Activated naive CD4-positive, alpha-beta T cell treated with anti-CD3 and anti-CD28 coated beads for 36 hours (primary cell): ENCODE measurements at regions of chr6 and their contacts with region 1.

Region 1: GRCh38 chr6:116287689-116288282 is 8.1 kb upstream of the TSPYL1 start:
- DNase-seq: no peak
- H3K4me3 Mint-ChIP-seq: no peak overlapping the region
- H3K27ac Mint-ChIP-seq: no peak overlapping the region
- H3K4me1 Mint-ChIP-seq: no peaks in the 10 kb centered on the region
- H3K27me3 Mint-ChIP-seq: no peaks in the 10 kb centered on the region

Region 2: GRCh38 chr6:116268589-116269293 is 19.0 kb before region 1 on chr6:
- CTCF ChIA-PET with region 1: interaction called, 10 read pairs
- intact Hi-C with region 1: no loop called
- DNase-seq: no peak
- H3K4me3 Mint-ChIP-seq: no peak overlapping the region
- H3K27ac Mint-ChIP-seq: no peak overlapping the region
- H3K4me1 Mint-ChIP-seq: peaks cover 27% of the 10 kb centered on the region
- H3K27me3 Mint-ChIP-seq: no peaks in the 10 kb centered on the region

Region 3: GRCh38 chr6:116444092-116444491 is 156.3 kb after region 1 on chr6:
- CTCF ChIA-PET with region 1: interaction called, 5 read pairs
- intact Hi-C with region 1: loop called (anchors 5 kb)
- DNase-seq: no peak
- H3K4me3 Mint-ChIP-seq: no peak overlapping the region
- H3K27ac Mint-ChIP-seq: no peak overlapping the region
- H3K4me1 Mint-ChIP-seq: peaks cover 2% of the 10 kb centered on the region
- H3K27me3 Mint-ChIP-seq: peaks cover 16% of the 10 kb centered on the region

Region 4: DNA sequence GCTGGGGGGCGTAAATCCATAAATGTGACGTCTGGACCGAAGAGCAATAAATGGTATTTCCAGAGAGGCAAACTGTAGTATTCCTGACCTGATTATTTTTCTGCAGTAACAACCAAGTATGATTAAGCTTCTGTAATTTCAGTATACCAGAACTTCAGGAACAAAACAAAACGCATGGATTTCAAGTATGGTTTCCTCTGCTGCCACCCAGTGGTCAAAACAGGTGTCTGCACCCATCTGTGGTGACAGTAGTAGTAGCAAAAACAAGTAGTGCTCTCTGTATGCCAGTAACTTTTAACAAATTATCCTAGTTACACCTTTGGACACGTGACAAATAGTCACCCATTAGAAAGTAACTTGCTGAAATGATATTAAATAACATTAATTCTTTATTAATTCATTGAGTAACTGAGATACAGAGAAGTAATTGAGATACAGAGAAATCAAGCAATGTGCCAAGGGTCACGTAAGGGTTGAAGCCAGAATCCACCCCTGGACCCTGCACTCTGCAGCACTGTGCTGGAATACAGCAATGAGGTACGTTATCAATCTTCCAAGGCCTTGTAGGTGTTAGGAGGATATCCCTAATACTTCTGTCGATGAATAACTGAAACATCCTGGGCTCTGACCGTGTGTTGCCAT is 273.7 kb after region 1 on chr6:
- CTCF ChIA-PET with region 1: interaction called, 19 read pairs
- intact Hi-C with region 1: loop called (anchors 1 kb)
- DNase-seq: peak; percentile 80
- H3K4me3 Mint-ChIP-seq: no peak overlapping the region
- H3K27ac Mint-ChIP-seq: no peak overlapping the region
- H3K4me1 Mint-ChIP-seq: peaks cover 3% of the 10 kb centered on the region
- H3K27me3 Mint-ChIP-seq: peaks cover 11% of the 10 kb centered on the region

Region 5: GRCh38 chr6:116648156-116648555 is 360.4 kb after region 1 on chr6:
- CTCF ChIA-PET with region 1: no interaction called
- intact Hi-C with region 1: loop called (anchors 5 kb)
- DNase-seq: no peak
- H3K4me3 Mint-ChIP-seq: no peak overlapping the region
- H3K27ac Mint-ChIP-seq: no peak overlapping the region
- H3K4me1 Mint-ChIP-seq: peaks cover 7% of the 10 kb centered on the region
- H3K27me3 Mint-ChIP-seq: no peaks in the 10 kb centered on the region